Endothelial cell of umbilical vein (primary cell): ENCODE measurements at regions of chr1 and their contacts with region 1.

Region 1: DNA sequence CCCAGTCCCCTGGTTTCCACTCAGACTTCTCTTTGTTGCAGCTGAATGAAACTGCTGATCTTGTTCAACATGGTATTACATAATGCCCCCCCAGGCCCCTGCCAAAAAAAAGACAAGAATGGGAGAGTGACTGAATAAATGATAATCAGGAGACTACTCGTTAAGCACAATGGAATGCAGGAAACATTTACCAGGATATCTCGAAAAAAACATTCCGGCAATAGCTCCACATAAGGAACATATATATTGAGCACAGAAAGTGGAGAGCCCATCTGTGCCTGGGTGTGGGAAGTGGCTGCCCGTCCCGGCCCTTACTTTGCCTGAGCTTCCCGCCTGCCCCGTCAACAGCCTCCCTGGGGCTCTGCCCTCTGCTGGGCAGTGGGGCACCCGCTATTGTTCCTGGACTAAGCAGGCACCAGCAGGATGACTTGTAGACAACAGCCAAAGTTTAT is 13.4 kb downstream of the TRIM11 start:
- DNase-seq: peak; percentile 75
- H3K4me3 ChIP-seq: no peak overlapping the region
- H3K27ac ChIP-seq: no peak overlapping the region
- H3K4me1 ChIP-seq: peaks cover 5% of the 10 kb centered on the region
- H3K27me3 ChIP-seq: no peaks in the 10 kb centered on the region
- CTCF ChIP-seq: peak; percentile 69 to 85
- POLR2A ChIP-seq: no peak

Region 2: DNA sequence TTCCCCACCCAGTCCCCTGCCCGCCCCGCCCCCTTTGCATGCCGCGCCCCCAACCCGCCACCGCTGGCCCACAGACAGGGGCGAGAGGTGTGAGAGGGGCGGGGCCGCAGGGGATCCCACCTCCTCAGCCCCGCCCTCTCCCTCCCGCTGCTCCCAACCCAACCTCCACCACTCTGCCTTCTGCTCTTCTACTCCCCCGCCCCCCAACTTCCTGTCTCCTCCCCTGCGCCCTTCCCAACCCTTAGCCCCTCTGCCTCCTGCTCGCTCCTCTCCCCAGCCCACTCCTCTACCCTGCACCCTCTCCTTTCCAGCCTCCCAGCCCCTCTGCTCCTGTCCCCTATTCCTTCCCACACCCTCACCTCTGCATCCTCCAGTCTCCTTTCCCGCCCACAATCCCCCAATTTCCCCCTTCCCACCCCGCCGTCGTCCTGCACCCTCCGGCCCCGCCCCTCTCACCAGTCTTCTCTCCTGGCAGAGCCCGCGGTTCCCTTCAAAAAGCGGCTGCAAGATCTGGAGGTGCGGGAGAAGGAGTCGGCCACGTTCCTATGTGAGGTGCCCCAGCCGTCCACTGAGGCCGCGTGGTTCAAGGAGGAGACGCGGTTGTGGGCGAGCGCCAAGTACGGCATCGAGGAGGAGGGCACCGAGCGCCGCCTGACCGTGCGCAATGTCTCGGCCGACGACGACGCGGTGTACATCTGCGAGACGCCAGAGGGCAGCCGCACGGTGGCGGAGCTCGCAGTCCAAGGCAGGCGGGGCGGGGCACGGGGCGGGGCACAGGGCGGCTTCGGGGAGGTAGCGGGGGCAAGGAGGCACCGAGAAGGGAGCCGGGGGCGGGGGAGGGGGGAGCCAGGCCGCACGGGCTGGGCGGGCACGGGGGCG is 180.1 kb before region 1 on chr1:
- CTCF ChIA-PET with region 1: interaction called, 7 read pairs
- POLR2A ChIA-PET with region 1: no interaction called
- dilution Hi-C with region 1: no loop called
- intact Hi-C with region 1: loop called (anchors 1 kb)
- DNase-seq: peak; percentile 63
- H3K4me3 ChIP-seq: peak overlapping the region in 1 of 3 experiments; percentile 26
- H3K27ac ChIP-seq: no peak overlapping the region
- H3K4me1 ChIP-seq: no peaks in the 10 kb centered on the region
- H3K27me3 ChIP-seq: peaks cover 4 to 16% of the 10 kb centered on the region in 2 experiments
- CTCF ChIP-seq: peak; percentile 33 to 73
- POLR2A ChIP-seq: no peak

Region 3: DNA sequence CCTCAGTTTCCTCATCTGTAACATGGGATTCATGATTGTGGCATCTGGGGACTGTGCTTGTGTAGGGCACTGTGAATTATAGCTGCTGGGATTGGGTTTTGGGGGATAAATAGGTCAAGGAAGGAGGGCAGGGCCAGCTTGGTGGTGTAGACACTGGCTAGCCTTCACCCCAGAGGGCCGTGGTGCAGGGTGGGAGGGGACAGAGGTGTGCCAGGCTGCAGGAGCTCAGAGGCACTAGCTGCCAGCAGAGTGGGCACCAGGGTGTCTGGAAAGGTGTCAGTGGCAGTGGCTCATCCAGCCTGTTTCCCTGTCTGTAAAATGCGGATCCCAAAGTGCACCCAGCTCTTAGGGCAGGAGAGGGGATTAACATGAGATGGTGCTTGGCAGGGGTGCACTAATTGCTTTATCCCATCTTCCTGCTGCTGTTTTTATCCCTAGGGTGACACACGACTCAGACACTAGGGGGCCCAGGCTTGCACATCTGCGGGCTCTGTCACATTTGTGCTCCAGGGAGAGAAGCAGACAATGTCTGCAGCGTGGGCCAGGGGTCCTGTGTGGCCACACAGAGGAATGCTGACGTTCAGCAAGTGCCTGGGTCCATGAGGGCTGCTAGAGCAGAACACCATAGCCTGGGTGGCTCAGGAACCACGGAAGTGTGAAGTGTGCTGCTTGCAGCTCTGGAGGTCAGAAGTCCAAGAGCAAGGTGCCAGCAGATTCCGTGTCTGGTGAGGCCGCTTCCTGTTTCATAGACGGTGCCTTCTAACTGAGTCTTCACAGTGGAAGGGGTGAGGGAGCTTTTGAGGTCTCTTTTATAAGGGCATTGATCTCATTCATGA is 166.1 kb before region 1 on chr1:
- CTCF ChIA-PET with region 1: interaction called, 5 read pairs
- POLR2A ChIA-PET with region 1: no interaction called
- dilution Hi-C with region 1: no loop called
- intact Hi-C with region 1: loop called (anchors 2 kb)
- DNase-seq: peak; percentile 15
- H3K4me3 ChIP-seq: no peak overlapping the region
- H3K27ac ChIP-seq: no peak overlapping the region
- H3K4me1 ChIP-seq: no peaks in the 10 kb centered on the region
- H3K27me3 ChIP-seq: peaks cover 0 to 5% of the 10 kb centered on the region in 2 experiments
- CTCF ChIP-seq: peak; percentile 12 to 47
- POLR2A ChIP-seq: no peak

Region 4: GRCh38 chr1:228236744-228237143 is 156.5 kb before region 1 on chr1:
- CTCF ChIA-PET with region 1: interaction called, 20 read pairs
- POLR2A ChIA-PET with region 1: no interaction called
- dilution Hi-C with region 1: no loop called
- intact Hi-C with region 1: loop called (anchors 2 kb)
- DNase-seq: peak; percentile 62
- H3K4me3 ChIP-seq: no peak overlapping the region
- H3K27ac ChIP-seq: no peak overlapping the region
- H3K4me1 ChIP-seq: no peaks in the 10 kb centered on the region
- H3K27me3 ChIP-seq: peaks cover 2 to 9% of the 10 kb centered on the region in 2 experiments
- CTCF ChIP-seq: peak; percentile 84
- POLR2A ChIP-seq: no peak

Region 5: DNA sequence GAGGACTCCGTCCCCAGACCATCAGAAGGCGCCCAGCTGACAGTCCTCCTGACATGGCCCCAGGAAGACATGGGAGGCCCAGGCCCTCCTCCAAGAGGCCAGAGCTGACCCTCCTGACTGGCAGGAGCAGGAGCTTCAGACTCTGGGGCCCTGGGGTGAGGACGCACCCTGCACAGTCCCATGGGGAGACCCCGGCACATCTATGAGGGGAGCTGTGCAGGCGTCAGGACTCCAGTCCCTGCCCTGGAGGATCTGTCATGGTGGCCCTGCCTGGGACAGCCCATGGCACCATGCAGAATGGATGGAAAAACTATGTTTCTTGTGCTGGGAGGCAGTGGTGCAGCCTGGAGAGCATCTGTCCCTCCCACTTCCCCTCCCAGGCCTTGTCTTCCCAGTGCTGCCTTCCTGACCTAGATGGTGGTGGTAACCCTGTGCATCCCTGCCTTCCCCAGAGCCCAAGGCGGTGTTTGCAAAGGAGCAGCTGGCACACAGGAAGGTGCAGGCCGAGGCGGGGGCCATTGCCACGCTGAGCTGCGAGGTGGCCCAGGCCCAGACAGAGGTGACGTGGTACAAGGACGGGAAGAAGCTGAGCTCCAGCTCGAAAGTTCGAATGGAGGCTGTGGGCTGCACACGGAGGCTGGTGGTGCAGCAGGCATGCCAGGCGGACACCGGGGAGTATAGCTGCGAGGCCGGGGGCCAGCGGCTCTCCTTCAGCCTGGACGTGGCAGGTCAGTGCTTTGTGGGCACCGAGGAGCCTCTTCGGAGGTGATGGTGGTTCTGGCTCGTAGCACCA is 143.6 kb before region 1 on chr1:
- CTCF ChIA-PET with region 1: no interaction called
- POLR2A ChIA-PET with region 1: no interaction called
- dilution Hi-C with region 1: no loop called
- intact Hi-C with region 1: no loop called
- DNase-seq: no peak
- H3K4me3 ChIP-seq: no peak overlapping the region
- H3K27ac ChIP-seq: no peak overlapping the region
- H3K4me1 ChIP-seq: no peaks in the 10 kb centered on the region
- H3K27me3 ChIP-seq: no peaks in the 10 kb centered on the region
- CTCF ChIP-seq: no peak
- POLR2A ChIP-seq: no peak

Region 6: DNA sequence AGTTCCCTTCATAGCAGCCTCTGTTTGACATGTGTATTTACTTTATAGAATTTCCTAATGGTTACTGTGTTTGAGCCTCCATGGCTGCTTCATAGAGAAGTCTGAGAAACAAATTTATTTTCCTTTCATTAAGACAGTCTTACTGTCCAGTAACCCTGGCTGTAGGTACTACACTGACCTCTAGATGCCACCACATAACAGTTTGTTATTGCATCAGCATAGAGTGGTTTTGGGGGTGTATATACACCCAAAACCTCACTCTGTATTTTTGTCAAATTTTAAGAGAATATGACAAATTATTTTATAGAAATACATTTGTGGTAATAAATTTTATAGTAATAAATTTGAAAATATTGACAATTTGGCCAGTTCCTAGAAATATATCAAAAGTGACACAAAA is 128.1 kb before region 1 on chr1:
- CTCF ChIA-PET with region 1: interaction called, 22 read pairs
- POLR2A ChIA-PET with region 1: no interaction called
- dilution Hi-C with region 1: no loop called
- intact Hi-C with region 1: loop called (anchors 1 kb)
- DNase-seq: peak; percentile 36
- H3K4me3 ChIP-seq: no peak overlapping the region
- H3K27ac ChIP-seq: no peak overlapping the region
- H3K4me1 ChIP-seq: peaks cover under 1% of the 10 kb centered on the region
- H3K27me3 ChIP-seq: no peaks in the 10 kb centered on the region
- CTCF ChIP-seq: peak; percentile 13 to 21
- POLR2A ChIP-seq: no peak

Region 7: GRCh38 chr1:228378090-228378872 is 15.0 kb before region 1 on chr1:
- CTCF ChIA-PET with region 1: interaction called, 16 read pairs
- POLR2A ChIA-PET with region 1: no interaction called
- dilution Hi-C with region 1: no loop called
- intact Hi-C with region 1: no loop called
- DNase-seq: peak; percentile 36
- H3K4me3 ChIP-seq: peak overlapping the region in 2 of 3 experiments; percentile 29 to 41
- H3K27ac ChIP-seq: no peak overlapping the region
- H3K4me1 ChIP-seq: peaks cover 5% of the 10 kb centered on the region
- H3K27me3 ChIP-seq: peaks cover 7 to 9% of the 10 kb centered on the region in 2 experiments
- CTCF ChIP-seq: peak; percentile 47 to 56
- POLR2A ChIP-seq: no peak

Region 8: GRCh38 chr1:228405987-228406265 is 12.7 kb after region 1 on chr1:
- CTCF ChIA-PET with region 1: interaction called, 42 read pairs
- POLR2A ChIA-PET with region 1: no interaction called
- dilution Hi-C with region 1: no loop called
- intact Hi-C with region 1: loop called (anchors 1 kb)
- DNase-seq: no peak
- H3K4me3 ChIP-seq: peak overlapping the region; percentile 70 to 96 (median 73)
- H3K27ac ChIP-seq: no peak overlapping the region
- H3K4me1 ChIP-seq: peaks cover 23% of the 10 kb centered on the region
- H3K27me3 ChIP-seq: no peaks in the 10 kb centered on the region
- CTCF ChIP-seq: no peak
- POLR2A ChIP-seq: no peak

Region 9: DNA sequence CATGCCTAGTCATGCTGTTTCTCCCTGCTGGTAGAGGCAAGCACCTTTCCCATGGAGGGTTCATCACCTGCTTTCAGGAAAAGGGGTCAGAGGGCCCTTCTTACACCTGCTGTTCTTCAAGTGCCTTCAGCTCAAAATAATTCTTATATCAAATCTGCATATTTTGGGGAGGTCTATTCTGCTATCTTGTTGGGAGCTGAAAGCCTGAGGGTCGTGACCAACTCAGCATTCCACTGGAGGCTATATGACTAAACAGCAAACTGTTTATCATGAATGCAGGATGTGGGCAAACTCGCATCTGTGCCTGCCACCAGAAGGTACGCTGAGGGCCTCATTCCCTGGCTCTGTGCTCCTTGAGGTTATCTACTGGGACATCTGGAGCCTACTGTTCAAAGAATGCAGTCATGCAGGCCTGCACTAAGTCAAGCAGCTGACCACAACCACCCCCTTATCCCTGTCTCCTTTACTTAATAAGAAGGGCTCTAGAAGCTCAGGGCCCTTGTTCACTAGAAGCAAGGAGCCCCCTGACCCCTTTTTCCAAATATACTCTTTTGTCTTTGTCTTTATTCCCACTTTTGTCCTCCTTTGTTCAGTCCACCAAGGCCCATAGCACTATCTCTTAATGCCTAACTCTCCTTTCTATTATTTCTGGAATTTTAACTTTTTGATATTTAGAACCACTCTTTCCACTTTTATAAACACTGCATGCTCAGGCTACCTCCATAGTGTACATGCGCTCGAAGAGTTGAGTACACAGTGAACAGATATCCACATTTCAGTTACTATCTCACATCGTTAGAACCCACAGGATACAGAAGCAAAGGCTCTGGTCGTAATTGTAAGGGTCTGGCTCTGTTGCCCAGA is 27.9 kb after region 1 on chr1:
- CTCF ChIA-PET with region 1: no interaction called
- POLR2A ChIA-PET with region 1: no interaction called
- dilution Hi-C with region 1: no loop called
- intact Hi-C with region 1: no loop called
- DNase-seq: no peak
- H3K4me3 ChIP-seq: no peak overlapping the region
- H3K27ac ChIP-seq: no peak overlapping the region
- H3K4me1 ChIP-seq: no peaks in the 10 kb centered on the region
- H3K27me3 ChIP-seq: peaks cover 19 to 27% of the 10 kb centered on the region in 2 experiments
- CTCF ChIP-seq: no peak
- POLR2A ChIP-seq: no peak